Panc1 (cell line): ENCODE measurements at regions of chr5 and their contacts with region 1.

Region 1: DNA sequence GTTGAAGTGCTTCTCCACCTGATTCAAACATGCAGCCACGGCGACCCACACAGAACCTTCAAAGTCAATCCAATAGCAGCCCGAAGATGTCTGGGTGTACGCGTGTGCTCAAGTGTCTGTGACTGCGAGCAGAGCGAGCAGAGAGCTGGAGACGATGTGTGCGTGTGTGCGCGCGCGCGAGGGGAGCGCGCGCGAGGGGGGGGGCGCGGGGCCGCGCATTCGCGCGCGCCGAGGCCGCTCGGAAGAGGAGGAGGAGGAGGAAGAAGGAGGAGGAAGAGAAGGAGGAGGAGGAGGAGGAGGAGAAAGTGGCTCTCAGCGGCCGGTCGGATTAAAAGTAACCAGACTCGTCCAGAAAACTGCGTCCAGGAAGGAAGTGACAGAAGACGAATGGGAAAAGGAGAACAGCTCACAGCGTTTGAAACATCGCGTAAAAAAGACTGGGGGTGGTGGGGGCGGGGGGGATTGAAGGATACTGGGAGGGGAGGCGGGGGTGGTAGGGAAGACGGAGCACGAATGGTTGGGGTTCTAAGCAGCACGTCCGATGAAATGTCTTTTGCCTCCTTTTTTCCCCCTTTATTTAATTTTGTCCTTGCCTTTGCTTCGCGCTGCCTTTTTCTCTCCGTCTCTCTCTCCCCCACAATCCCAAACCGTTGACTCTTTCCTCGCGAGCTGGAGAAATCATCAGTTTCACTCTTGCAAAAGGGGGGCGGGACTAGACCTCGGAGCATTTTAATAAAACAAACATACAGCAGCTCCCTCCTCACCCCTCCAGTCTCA is at the start of gene MEF2C:
- DNase-seq: no peak
- ATAC-seq: peak; percentile 82
- H3K4me3 ChIP-seq: peak within 1 kb of the TSS; percentile 66 to 79
- H3K27ac ChIP-seq: peak within 1 kb of the TSS; percentile 92
- H3K4me1 ChIP-seq: peaks cover 47% of the 10 kb centered on the region
- H3K27me3 ChIP-seq: no peaks in the 10 kb centered on the region
- CTCF ChIP-seq: no peak
- total RNA-seq, gene MEF2C: 9.9 TPM

Region 2: DNA sequence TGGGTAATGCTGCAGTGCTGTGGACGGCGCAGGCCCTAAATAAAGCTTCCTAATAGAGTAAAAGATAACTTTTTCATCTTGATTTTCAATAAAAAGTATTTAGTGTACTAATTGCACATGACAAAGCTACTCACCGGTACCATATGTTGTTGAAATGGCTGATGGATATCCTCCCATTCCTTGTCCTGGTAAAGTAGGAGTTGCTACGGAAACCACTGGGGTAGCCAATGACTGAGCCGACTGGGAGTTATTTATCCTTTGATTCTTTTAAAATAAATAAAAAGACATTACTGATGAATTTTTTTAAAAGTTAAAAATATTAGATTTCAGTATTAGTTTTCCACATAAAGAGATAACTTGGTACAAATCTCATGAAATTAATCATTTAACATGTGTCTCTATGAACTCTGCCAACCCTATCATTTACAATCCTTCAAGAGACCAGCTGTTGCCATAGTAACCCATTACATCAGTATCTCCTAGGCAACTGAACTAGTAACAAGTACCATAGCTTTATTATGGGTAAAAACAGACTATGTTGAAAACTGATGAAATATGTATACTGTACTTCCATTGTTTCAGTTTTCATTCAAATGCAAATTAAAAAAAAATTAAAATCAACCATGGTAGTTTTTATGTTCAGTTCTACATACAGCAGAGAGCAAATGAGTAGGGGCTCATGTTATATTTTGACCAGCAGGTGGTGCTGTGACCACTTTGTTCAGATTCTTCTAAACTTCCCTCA is 154.0 kb before region 1 on chr5:
- CTCF ChIA-PET with region 1: interaction called, 3 read pairs
- POLR2A ChIA-PET with region 1: interaction called, 3 read pairs
- in situ Hi-C with region 1: no loop called
- intact Hi-C with region 1: loop called (anchors 2 kb)
- DNase-seq: peak; percentile 73
- ATAC-seq: peak; percentile 94
- H3K4me3 ChIP-seq: no peak overlapping the region
- H3K27ac ChIP-seq: no peak overlapping the region
- H3K4me1 ChIP-seq: peaks cover 10% of the 10 kb centered on the region
- H3K27me3 ChIP-seq: no peaks in the 10 kb centered on the region
- CTCF ChIP-seq: peak; percentile 71; the same call in 1 of the 2 replicates

Region 3: DNA sequence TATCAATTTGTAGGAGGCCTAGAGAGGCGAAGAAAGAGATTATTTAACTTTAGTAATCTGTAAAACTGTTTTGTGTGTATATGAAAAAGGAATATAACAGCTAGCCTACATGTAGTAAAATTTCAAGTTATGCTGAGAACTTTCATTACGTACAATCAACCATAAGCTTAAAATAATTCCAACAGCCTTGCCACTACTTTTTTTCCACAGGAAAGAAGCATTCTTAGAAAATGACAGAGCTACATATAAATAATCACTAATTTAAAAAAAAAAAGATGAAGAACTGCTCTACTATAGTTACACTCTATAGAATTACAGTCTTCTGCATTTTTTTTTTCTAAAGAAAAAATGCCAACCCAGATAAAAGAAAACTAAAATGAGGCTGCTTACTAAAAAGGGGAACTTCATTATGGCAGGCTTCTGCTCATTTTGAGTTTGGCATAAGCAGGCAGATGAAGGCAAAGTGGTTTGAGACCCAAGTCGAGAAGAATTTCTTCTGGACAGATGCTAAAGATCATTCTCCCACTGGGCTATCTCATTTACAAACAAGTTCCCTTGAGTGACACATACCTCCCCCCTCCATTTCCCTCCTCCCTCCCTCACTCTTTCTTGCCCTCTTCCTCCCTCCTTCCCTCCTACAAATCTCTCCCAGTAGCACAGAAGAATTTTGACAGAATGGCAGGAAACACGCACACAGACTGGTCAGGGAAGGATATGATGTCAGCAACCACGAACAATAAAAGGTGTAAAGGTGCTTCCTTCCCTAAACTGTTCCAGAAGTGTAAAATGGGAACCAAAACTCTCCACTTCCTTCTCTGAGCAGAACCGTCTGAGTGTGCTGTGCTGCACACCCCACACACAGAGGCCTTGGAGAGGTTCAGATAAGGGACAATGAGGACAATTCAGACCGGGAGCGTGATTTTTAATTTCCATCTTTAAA is 56.3 kb before region 1 on chr5:
- CTCF ChIA-PET with region 1: no interaction called
- POLR2A ChIA-PET with region 1: interaction called, 4 read pairs
- in situ Hi-C with region 1: no loop called
- intact Hi-C with region 1: loop called (anchors 5 kb)
- DNase-seq: no peak
- ATAC-seq: peak; percentile 82
- H3K4me3 ChIP-seq: peak overlapping the region; percentile 13 to 38; a peak in 3 of 4 replicates
- H3K27ac ChIP-seq: peak overlapping the region; percentile 91
- H3K4me1 ChIP-seq: peaks cover 38% of the 10 kb centered on the region
- H3K27me3 ChIP-seq: no peaks in the 10 kb centered on the region
- CTCF ChIP-seq: no peak

Region 4: DNA sequence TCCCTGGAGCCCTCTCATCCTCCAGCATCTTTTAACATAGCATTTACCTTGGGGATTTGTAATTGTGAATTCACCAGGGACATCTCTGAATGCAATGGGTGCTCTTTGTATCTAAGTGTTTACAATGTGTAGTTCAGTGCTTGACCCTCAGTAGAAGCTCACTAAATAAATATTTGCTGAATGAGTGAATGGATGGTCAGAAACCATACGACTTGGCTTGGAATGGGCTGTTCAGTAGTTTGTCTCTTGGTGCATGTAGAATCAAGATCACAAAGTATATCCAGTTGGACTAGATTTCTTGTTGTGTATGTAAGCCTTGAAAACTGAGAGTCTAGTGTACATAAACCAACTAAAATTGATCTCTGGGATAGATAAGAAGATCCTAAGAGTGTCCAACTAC is 81.6 kb after region 1 on chr5:
- CTCF ChIA-PET with region 1: no interaction called
- POLR2A ChIA-PET with region 1: no interaction called
- in situ Hi-C with region 1: no loop called
- intact Hi-C with region 1: no loop called
- DNase-seq: peak; percentile 79
- ATAC-seq: peak; percentile 68; the same call in 1 of the 2 replicates
- H3K4me3 ChIP-seq: no peak overlapping the region
- H3K27ac ChIP-seq: no peak overlapping the region
- H3K4me1 ChIP-seq: no peaks in the 10 kb centered on the region; the same call in 1 of the 2 replicates
- H3K27me3 ChIP-seq: no peaks in the 10 kb centered on the region
- CTCF ChIP-seq: no peak

Region 5: GRCh38 chr5:90264689-90265544 is 1381.7 kb after region 1 on chr5:
- CTCF ChIA-PET with region 1: interaction called, 6 read pairs
- POLR2A ChIA-PET with region 1: no interaction called
- in situ Hi-C with region 1: no loop called
- intact Hi-C with region 1: loop called (anchors 10 kb)
- DNase-seq: peak; percentile 58
- ATAC-seq: peak; percentile 81
- H3K4me3 ChIP-seq: no peak overlapping the region
- H3K27ac ChIP-seq: no peak overlapping the region
- H3K4me1 ChIP-seq: no peaks in the 10 kb centered on the region
- H3K27me3 ChIP-seq: no peaks in the 10 kb centered on the region
- CTCF ChIP-seq: peak; percentile 96